Activated CD4-positive, alpha-beta T cell treated with anti-CD3 and anti-CD28 coated beads for 36 hours (primary cell): ENCODE measurements at regions of chr18 and their contacts with region 1.

Region 1: GRCh38 chr18:50281295-50281971 is at the start of gene MBD1:
- DNase-seq: peak; percentile 97
- ATAC-seq: peak; percentile 91
- H3K4me3 Mint-ChIP-seq: peak within 1 kb of the TSS; percentile 91
- H3K27ac Mint-ChIP-seq: peak within 1 kb of the TSS; percentile 79
- H3K4me1 Mint-ChIP-seq: peaks cover 35% of the 10 kb centered on the region
- H3K27me3 Mint-ChIP-seq: no peaks in the 10 kb centered on the region
- total RNA-seq, gene MBD1: 62.2 to 70.5 TPM

Region 2: DNA sequence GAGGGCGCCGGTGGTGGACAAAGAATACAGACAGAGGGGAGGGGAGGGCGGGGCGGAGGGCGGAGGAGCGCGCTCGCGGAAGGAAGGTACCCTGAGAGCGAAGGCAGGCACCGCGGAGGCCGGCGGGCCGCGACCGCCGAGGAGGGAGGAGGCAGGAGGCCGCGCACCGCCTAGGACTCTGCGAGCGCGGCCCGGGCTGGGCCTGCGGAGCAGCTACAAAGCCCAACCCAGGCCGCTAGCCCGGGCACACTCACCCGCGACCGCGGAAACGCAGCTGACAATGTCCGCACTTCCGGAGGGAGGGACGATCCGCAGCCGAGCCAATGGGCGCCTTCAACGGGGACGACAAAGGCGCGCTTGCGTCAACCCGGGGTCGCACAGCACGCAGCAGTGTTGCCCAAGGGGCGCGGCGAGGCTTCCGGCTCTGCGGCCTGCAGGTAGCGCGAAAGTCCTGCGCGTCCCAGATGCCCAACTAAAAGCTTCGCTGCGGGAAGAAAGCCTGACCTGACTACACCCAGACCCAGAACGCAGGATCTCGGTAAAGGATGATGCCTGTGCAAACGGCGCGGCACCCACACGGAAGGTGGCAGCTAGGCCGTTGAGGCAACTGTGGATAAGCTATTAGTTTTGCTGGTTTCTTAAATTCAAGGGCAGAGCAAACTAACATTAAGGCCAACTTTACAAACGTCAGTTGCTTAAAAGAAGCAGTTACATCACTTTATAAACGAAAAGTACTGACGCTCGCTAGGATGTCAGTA is 794.3 kb before region 1 on chr18 and contains the start of gene C18orf32:
- CTCF ChIA-PET with region 1: no interaction called
- POLR2A ChIA-PET with region 1: no interaction called
- intact Hi-C with region 1: loop called in 1 of 2 experiments (anchors 1 kb)
- DNase-seq: peak; percentile 96
- ATAC-seq: peak; percentile 92
- H3K4me3 Mint-ChIP-seq: peak within 1 kb of the TSS; percentile 95
- H3K27ac Mint-ChIP-seq: peak within 1 kb of the TSS; percentile 100
- H3K4me1 Mint-ChIP-seq: peaks cover 60% of the 10 kb centered on the region
- H3K27me3 Mint-ChIP-seq: no peaks in the 10 kb centered on the region
- total RNA-seq, gene C18orf32: 12.7 to 20.0 TPM

Region 3: GRCh38 chr18:50307738-50308470 is 26.5 kb after region 1 on chr18:
- CTCF ChIA-PET with region 1: interaction called, 4 read pairs
- POLR2A ChIA-PET with region 1: no interaction called
- intact Hi-C with region 1: loop called in 1 of 2 experiments (anchors 1 kb)
- DNase-seq: peak; percentile 95
- ATAC-seq: peak; percentile 99
- H3K4me3 Mint-ChIP-seq: peak overlapping the region; percentile 73
- H3K27ac Mint-ChIP-seq: peak overlapping the region; percentile 37
- H3K4me1 Mint-ChIP-seq: peaks cover 11% of the 10 kb centered on the region
- H3K27me3 Mint-ChIP-seq: peaks cover 3% of the 10 kb centered on the region

Region 4: DNA sequence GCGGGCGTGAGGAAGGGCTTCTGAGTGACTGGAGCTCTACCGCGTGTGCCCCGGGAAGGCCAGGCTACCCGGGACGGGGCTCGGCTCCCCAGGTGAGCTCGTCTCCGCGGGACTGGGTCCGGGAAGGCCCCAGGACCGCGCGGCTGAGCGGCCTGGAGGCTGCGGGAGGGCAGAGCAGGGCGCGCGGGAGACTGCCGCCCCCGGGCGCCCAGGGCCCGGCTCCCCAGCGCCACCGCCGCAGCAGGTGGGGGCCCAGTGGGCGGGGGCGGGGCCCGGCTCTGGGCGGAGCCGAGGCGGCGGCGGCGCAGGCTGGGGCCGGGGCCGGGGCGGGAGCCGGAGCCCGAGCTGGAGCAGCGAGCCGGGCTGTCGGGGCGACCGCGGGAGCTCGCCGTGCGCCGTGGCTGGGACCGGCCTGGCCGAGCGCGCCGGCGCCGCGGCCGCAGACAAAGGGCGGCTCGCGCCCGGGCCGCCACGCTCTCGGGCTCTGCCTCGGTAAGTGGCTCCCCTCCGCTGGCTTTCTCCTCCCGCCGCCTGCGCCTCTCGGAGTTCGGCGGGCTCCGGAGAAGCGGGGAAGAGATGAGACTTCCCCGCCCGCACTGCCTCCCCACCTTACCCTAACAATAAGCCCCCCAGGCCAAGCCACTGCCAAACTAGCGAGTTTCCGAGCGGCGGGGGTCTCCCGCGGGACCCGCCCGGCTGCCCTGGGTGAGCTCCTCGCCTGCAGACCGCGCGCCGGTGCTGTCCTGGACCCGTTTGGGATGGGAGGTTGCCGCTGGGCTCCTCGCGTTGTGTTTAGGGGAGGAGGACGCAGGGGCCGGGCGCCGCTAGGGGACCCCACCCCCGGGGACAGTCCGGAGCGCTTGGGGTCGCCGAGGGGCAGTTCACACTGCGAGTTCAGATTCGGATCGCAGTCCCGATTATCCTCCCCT is 278.6 kb after region 1 on chr18 and contains the start of gene MAPK4:
- CTCF ChIA-PET with region 1: no interaction called
- POLR2A ChIA-PET with region 1: no interaction called
- intact Hi-C with region 1: no loop called
- DNase-seq: peak; percentile 43
- ATAC-seq: peak; percentile 83
- H3K4me3 Mint-ChIP-seq: peak within 1 kb of the TSS; percentile 46
- H3K27ac Mint-ChIP-seq: no peak within 1 kb of the TSS
- H3K4me1 Mint-ChIP-seq: peaks cover 4% of the 10 kb centered on the region
- H3K27me3 Mint-ChIP-seq: peaks cover 61% of the 10 kb centered on the region
- total RNA-seq, gene MAPK4: not detected